CD8-positive, alpha-beta T cell (primary cell): ENCODE measurements at regions of chr21 and their contacts with region 1.

Region 1: DNA sequence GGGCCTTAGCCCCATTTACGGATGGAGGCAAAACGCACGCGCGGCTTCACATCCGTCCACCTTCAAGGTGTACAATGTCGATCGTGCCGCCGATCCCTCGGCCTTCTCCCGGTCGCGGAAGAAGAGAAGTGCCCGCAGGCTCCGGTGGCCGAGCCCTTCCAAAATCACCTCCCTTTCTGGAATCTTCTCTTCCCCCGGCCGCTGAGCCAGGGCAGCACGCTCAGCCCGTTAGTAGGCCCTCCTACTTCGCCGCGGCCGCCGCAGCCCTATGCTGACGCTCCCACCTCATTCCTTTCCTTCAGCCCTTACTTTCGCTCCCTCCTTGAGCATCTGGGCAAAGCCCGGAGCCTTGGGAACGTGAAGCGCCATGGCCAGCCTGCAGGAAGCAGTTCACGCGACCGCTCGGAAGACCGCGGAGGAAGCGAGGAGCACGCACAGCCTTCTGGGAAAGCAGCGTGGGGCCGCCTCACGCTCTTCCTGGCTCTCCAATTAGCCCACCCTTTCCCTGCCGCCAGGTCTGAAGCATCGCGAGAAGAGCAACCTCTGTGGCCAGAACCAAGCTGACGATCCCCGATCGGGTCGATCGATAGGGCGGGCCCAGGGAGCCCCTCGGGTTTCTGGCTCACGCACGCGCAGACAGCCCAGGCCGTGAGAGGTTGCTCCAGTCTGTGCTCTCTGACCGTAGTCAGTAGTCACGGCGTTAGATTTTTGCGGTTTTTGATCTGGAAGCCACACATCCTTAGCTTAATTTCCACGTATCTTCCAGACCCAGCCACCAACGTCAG is at the start of gene CCT8:
- DNase-seq: peak; percentile 95 to 100 (median 98)
- ATAC-seq: peak; percentile 93
- H3K4me3 ChIP-seq: peak within 1 kb of the TSS; percentile 88 to 92
- H3K4me3 Mint-ChIP-seq: peak within 1 kb of the TSS; percentile 100
- H3K27ac ChIP-seq: peak within 1 kb of the TSS; percentile 87 to 88
- H3K27ac Mint-ChIP-seq: peak within 1 kb of the TSS; percentile 98
- H3K4me1 ChIP-seq: peaks cover 42% of the 10 kb centered on the region
- H3K4me1 Mint-ChIP-seq: peaks cover 69% of the 10 kb centered on the region
- H3K27me3 ChIP-seq: no peaks in the 10 kb centered on the region
- H3K27me3 Mint-ChIP-seq: no peaks in the 10 kb centered on the region
- CTCF ChIP-seq: no peak
- total RNA-seq, gene CCT8: 104 to 116 TPM

Region 2: DNA sequence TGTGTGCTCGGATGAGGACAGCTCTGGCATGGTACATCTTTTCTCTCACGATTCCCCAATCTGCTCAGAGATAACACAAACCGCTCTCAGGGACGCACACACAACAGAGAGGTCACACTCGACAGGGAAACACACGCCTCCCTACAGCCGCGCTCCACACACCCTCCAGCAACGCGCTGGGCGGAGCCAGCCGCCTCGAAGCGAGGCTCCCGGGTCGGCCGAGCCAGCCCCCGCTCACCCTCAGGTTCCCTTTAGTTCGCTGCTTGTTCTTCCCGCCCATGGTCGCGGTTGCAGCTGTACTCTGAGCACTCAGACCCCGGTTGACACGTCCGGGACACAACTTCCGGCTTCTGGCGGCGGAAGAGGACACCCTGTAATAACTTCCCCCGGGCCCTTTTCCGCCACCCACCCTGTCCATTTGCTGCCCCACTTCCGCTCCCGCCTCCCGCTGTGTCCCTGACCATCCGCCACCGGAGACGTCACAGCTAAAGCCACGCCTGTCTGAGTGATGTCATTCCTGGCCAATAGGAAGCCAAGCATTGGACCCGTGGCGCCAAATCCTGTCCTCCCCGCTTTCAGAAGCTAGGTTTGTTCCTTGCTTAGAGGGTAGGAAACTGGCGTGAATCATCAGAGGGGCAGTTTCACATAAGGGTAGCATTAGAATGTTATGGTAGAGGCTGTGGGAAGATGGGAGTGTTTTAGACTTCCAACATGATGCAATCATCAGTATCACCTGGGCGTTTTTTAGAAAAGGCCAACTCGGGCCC is 80.7 kb before region 1 on chr21 and contains the start of gene LTN1:
- CTCF ChIA-PET with region 1: interaction called, 3 read pairs
- POLR2A ChIA-PET with region 1: interaction called, 14 read pairs
- intact Hi-C with region 1: loop called (anchors 1 kb)
- DNase-seq: peak; percentile 98 to 100 (median 99)
- ATAC-seq: peak; percentile 93
- H3K4me3 ChIP-seq: peak within 1 kb of the TSS; percentile 95 to 98
- H3K4me3 Mint-ChIP-seq: peak within 1 kb of the TSS; percentile 93
- H3K27ac ChIP-seq: peak within 1 kb of the TSS; percentile 84 to 88
- H3K27ac Mint-ChIP-seq: peak within 1 kb of the TSS; percentile 95
- H3K4me1 ChIP-seq: peaks cover 21% of the 10 kb centered on the region
- H3K4me1 Mint-ChIP-seq: peaks cover 40% of the 10 kb centered on the region
- H3K27me3 ChIP-seq: no peaks in the 10 kb centered on the region
- H3K27me3 Mint-ChIP-seq: no peaks in the 10 kb centered on the region
- CTCF ChIP-seq: no peak
- total RNA-seq, gene LTN1: 26.3 to 28.5 TPM

Region 3: DNA sequence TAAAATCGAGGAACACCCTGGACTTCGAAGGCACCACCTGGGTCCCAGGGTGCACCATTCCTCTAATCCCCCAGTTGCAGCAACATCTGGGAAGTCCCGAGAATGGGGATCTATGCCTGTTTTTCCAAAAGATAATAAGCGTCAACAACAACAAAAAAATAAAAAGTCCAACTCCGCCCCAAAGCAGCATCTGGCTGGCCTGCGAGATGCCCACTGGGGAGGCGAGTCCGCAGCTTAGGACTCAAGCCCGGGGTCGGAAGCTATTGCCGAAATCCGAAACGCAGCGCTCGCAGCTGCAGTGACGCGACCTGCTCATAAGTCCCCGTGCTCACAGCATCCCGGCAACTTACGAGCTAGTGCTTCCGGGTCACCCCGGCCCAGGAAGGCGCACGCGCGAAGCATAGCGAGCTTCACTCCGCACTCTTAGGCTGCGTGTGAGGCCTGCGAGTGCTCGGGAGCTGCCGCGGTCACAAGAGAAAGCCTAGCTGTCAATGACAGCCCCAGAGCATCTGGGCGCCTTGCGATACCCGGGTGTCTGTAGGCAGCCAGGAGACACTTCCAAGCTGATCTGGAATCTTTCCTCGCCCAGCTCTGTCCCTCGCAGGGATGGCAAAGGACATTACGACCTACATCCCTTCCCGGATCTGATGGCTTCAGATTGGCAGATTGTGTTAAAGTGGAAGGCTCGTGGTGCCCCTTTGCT is 70.8 kb before region 1 on chr21:
- CTCF ChIA-PET with region 1: no interaction called
- POLR2A ChIA-PET with region 1: interaction called, 11 read pairs
- intact Hi-C with region 1: loop called in 1 of 2 experiments (anchors 1 kb)
- DNase-seq: peak; percentile 90 to 99 (median 95)
- ATAC-seq: peak; percentile 100
- H3K4me3 ChIP-seq: peak overlapping the region; percentile 65 to 71
- H3K4me3 Mint-ChIP-seq: peak overlapping the region; percentile 93
- H3K27ac ChIP-seq: peak overlapping the region; percentile 93 to 94
- H3K27ac Mint-ChIP-seq: peak overlapping the region; percentile 99
- H3K4me1 ChIP-seq: peaks cover 8% of the 10 kb centered on the region
- H3K4me1 Mint-ChIP-seq: peaks cover 15% of the 10 kb centered on the region
- H3K27me3 ChIP-seq: no peaks in the 10 kb centered on the region
- H3K27me3 Mint-ChIP-seq: no peaks in the 10 kb centered on the region
- CTCF ChIP-seq: no peak

Region 4: GRCh38 chr21:29018540-29018939 is 54.9 kb before region 1 on chr21:
- CTCF ChIA-PET with region 1: interaction called, 7 read pairs
- POLR2A ChIA-PET with region 1: interaction called, 30 read pairs
- intact Hi-C with region 1: no loop called
- DNase-seq: no peak
- ATAC-seq: no peak
- H3K4me3 ChIP-seq: peak overlapping the region; percentile 70 to 99
- H3K4me3 Mint-ChIP-seq: peak overlapping the region; percentile 89
- H3K27ac ChIP-seq: peak overlapping the region; percentile 77 to 79
- H3K27ac Mint-ChIP-seq: peak overlapping the region; percentile 93
- H3K4me1 ChIP-seq: peaks cover 38% of the 10 kb centered on the region
- H3K4me1 Mint-ChIP-seq: peaks cover 41% of the 10 kb centered on the region
- H3K27me3 ChIP-seq: no peaks in the 10 kb centered on the region
- H3K27me3 Mint-ChIP-seq: no peaks in the 10 kb centered on the region
- CTCF ChIP-seq: no peak

Region 5: GRCh38 chr21:29024474-29025327 is 48.7 kb before region 1 on chr21 and contains the start of gene USP16:
- CTCF ChIA-PET with region 1: interaction called, 7 read pairs
- POLR2A ChIA-PET with region 1: interaction called, 30 read pairs
- intact Hi-C with region 1: loop called (anchors 1 to 2 kb)
- DNase-seq: peak; percentile 87 to 98 (median 94)
- ATAC-seq: peak; percentile 87
- H3K4me3 ChIP-seq: peak within 1 kb of the TSS; percentile 65 to 91
- H3K4me3 Mint-ChIP-seq: peak within 1 kb of the TSS; percentile 95
- H3K27ac ChIP-seq: peak within 1 kb of the TSS; percentile 93 to 98
- H3K27ac Mint-ChIP-seq: peak within 1 kb of the TSS; percentile 100
- H3K4me1 ChIP-seq: peaks cover 45% of the 10 kb centered on the region
- H3K4me1 Mint-ChIP-seq: peaks cover 59% of the 10 kb centered on the region
- H3K27me3 ChIP-seq: no peaks in the 10 kb centered on the region
- H3K27me3 Mint-ChIP-seq: no peaks in the 10 kb centered on the region
- CTCF ChIP-seq: no peak
- total RNA-seq, gene USP16: 84.8 to 91.2 TPM

Region 6: GRCh38 chr21:29449306-29449950 is 376.0 kb after region 1 on chr21:
- CTCF ChIA-PET with region 1: no interaction called
- POLR2A ChIA-PET with region 1: interaction called, 3 read pairs
- intact Hi-C with region 1: loop called in 1 of 2 experiments (anchors 1 kb)
- DNase-seq: peak in 3 of 9 experiments; percentile 41 to 69 (median 42)
- ATAC-seq: peak; percentile 84
- H3K4me3 ChIP-seq: no peak overlapping the region
- H3K4me3 Mint-ChIP-seq: peak overlapping the region; percentile 70
- H3K27ac ChIP-seq: peak overlapping the region; percentile 52 to 65
- H3K27ac Mint-ChIP-seq: peak overlapping the region; percentile 97
- H3K4me1 ChIP-seq: peaks cover 23% of the 10 kb centered on the region
- H3K4me1 Mint-ChIP-seq: peaks cover 40% of the 10 kb centered on the region
- H3K27me3 ChIP-seq: no peaks in the 10 kb centered on the region
- H3K27me3 Mint-ChIP-seq: no peaks in the 10 kb centered on the region
- CTCF ChIP-seq: no peak